IMR-90 (cell line): ENCODE measurements at regions of chr20 and their contacts with region 1.

Region 1: GRCh38 chr20:23340524-23340923 is 10.1 kb upstream of the NXT1 start:
- DNase-seq: peak; percentile 69
- ATAC-seq: peak; percentile 84
- H3K4me3 ChIP-seq: no peak overlapping the region
- H3K27ac ChIP-seq: no peak overlapping the region
- H3K4me1 ChIP-seq: no peaks in the 10 kb centered on the region
- H3K27me3 ChIP-seq: peaks cover 13% of the 10 kb centered on the region
- CTCF ChIP-seq: peak; percentile 73
- POLR2A ChIP-seq: no peak
- RAD21 ChIP-seq: peak; percentile 89

Region 2: DNA sequence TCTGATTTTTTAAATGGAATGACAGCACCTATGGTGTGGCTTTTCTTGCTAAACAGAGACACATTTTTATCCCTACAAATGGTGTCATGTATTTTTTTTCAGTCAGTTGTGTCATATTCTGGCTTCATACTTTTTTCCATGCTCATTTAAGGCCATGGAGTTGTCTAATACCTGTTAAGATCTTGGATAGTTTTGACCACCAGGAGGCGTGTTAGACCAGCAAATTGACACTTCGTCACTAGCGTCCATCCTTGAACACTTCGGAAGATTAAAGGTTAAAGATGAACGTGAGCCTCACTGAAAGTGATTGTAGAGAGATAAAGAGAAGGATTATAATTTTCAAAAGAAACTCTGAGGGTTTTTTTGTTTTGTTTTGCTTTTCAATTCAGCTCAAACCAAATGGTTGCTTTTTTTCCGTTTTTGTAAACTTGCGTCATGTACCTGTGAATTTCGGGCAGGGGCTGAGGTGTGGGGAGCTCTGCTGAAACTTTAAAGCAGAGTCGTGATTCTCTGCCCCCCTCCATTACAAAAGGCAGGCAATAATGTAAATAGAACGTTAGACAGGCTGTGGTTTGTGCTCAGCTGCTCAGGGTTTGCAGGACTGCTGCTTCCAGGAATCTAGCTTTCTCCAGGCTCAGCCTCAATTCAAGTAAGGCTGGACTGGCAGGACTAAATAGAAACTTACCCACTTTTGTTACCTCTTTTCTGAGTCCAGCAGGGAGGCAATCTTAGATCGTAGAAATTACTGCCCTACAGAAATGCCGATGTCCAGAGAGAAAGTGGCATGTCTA is 1001.2 kb before region 1 on chr20:
- CTCF ChIA-PET with region 1: no interaction called
- POLR2A ChIA-PET with region 1: no interaction called
- dilution Hi-C with region 1: no loop called
- in situ Hi-C with region 1: loop called (anchors 25 kb)
- intact Hi-C with region 1: loop called (anchors 5 kb)
- DNase-seq: peak; percentile 63
- ATAC-seq: peak; percentile 74
- H3K4me3 ChIP-seq: no peak overlapping the region
- H3K27ac ChIP-seq: no peak overlapping the region
- H3K4me1 ChIP-seq: no peaks in the 10 kb centered on the region
- H3K27me3 ChIP-seq: no peaks in the 10 kb centered on the region
- CTCF ChIP-seq: peak; percentile 68
- POLR2A ChIP-seq: no peak
- RAD21 ChIP-seq: peak; percentile 70

Region 3: DNA sequence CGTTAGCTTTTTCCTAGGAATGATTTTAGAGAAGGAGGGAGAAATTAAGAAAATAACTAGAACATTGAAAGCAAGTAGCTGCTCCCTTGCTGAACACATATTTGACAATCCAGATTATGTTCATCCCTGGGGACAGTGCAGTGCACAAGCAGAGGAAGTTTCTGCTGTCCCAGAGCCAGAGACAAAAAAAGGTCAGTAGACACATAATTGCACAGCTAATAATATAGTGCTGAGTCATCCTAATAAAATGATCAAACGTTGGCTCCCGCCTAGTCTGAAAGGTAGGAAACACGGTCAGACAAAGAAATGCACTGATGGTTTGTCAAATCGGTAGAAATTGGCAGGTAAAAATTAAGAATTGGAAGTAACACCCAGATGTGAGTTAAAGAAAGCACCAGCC is 327.1 kb before region 1 on chr20:
- CTCF ChIA-PET with region 1: no interaction called
- POLR2A ChIA-PET with region 1: no interaction called
- dilution Hi-C with region 1: no loop called
- in situ Hi-C with region 1: no loop called
- intact Hi-C with region 1: no loop called
- DNase-seq: no peak
- ATAC-seq: no peak
- H3K4me3 ChIP-seq: no peak overlapping the region
- H3K27ac ChIP-seq: no peak overlapping the region
- H3K4me1 ChIP-seq: no peaks in the 10 kb centered on the region
- H3K27me3 ChIP-seq: peaks cover 3% of the 10 kb centered on the region; the same call in 1 of the 2 replicates
- CTCF ChIP-seq: no peak
- POLR2A ChIP-seq: no peak
- RAD21 ChIP-seq: no peak

Region 4: DNA sequence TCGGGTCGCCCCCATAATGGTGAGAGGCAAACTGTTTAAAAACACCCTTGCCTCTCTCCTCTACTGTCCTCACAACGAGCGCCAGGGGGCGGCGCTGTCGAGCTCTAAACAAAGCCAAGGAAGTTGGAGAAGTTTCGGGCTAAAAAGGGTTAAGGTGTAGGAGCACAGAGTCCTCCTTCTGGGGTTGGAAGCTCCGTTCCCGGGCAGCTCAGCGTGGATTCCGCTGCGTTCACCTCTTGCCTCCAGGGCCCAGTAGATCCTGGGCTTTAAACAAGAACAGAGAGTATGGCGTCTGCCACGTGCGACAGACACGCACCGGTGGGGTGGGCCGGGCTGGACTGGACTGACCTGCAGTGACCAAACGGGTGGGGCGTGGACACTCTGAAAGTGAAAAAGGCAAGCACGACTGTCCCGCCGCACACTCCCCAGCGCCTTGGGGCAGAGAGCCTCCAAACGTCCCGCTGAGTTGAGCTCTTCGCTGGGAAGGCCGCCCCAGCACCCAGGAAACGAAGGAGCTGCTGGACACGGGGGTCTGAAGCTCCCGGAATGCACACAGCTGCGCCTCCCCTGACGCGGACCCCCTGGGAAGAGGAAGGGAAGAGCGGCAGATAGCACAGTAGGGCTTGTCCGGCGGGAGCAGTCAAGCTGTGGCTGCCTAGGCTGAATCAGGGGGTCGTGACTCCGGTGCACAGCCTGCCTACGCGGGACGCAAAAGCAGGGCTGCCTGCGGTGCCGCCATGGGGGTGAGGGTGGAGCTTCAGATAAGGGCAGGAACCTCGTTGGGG is 289.5 kb before region 1 on chr20:
- CTCF ChIA-PET with region 1: interaction called, 4 read pairs
- POLR2A ChIA-PET with region 1: no interaction called
- dilution Hi-C with region 1: no loop called
- in situ Hi-C with region 1: loop called (anchors 10 kb)
- intact Hi-C with region 1: loop called (anchors 1 kb)
- DNase-seq: peak; percentile 52
- ATAC-seq: peak; percentile 54
- H3K4me3 ChIP-seq: peak overlapping the region; percentile 31
- H3K27ac ChIP-seq: no peak overlapping the region; the same call in 1 of the 2 replicates
- H3K4me1 ChIP-seq: peaks cover 4% of the 10 kb centered on the region; the same call in 1 of the 2 replicates
- H3K27me3 ChIP-seq: peaks cover 74% of the 10 kb centered on the region
- CTCF ChIP-seq: peak; percentile 63
- POLR2A ChIP-seq: no peak
- RAD21 ChIP-seq: peak; percentile 67

Region 5: GRCh38 chr20:23235173-23236027 is 105.1 kb before region 1 on chr20:
- CTCF ChIA-PET with region 1: interaction called, 12 read pairs
- POLR2A ChIA-PET with region 1: no interaction called
- dilution Hi-C with region 1: no loop called
- in situ Hi-C with region 1: no loop called
- intact Hi-C with region 1: no loop called
- DNase-seq: peak; percentile 54
- ATAC-seq: peak; percentile 71
- H3K4me3 ChIP-seq: no peak overlapping the region
- H3K27ac ChIP-seq: no peak overlapping the region
- H3K4me1 ChIP-seq: peaks cover 5% of the 10 kb centered on the region; the same call in 1 of the 2 replicates
- H3K27me3 ChIP-seq: peaks cover 4% of the 10 kb centered on the region; the same call in 1 of the 2 replicates
- CTCF ChIP-seq: peak; percentile 67
- POLR2A ChIP-seq: no peak
- RAD21 ChIP-seq: peak; percentile 79

Region 6: DNA sequence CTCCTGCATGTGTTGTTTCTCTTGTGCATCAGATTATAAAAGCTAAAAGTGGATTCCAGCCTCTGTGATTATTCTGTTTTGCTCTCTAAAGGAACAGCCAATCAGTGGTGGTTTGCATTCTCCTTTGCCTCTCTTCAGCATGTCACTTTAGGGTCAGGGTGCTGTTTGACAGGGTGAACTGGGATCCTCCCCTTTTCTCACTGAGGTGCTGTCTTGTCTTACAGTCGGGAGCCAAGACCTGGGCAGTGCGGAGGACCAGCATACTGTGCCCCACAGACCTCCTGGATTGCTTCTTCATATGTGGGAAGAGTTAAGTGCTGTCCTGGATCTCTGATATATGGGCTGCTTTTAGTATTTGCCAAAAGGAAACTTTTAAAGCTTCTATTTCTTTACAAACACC is 501.2 kb after region 1 on chr20:
- CTCF ChIA-PET with region 1: no interaction called
- POLR2A ChIA-PET with region 1: no interaction called
- dilution Hi-C with region 1: no loop called
- in situ Hi-C with region 1: no loop called
- intact Hi-C with region 1: no loop called
- DNase-seq: no peak
- ATAC-seq: no peak
- H3K4me3 ChIP-seq: no peak overlapping the region
- H3K27ac ChIP-seq: no peak overlapping the region
- H3K4me1 ChIP-seq: no peaks in the 10 kb centered on the region
- H3K27me3 ChIP-seq: no peaks in the 10 kb centered on the region; the same call in 1 of the 2 replicates
- CTCF ChIP-seq: no peak
- POLR2A ChIP-seq: no peak
- RAD21 ChIP-seq: no peak